ENCODE measurements at regions of chr1 and their contacts with region 1.

Region 1: DNA sequence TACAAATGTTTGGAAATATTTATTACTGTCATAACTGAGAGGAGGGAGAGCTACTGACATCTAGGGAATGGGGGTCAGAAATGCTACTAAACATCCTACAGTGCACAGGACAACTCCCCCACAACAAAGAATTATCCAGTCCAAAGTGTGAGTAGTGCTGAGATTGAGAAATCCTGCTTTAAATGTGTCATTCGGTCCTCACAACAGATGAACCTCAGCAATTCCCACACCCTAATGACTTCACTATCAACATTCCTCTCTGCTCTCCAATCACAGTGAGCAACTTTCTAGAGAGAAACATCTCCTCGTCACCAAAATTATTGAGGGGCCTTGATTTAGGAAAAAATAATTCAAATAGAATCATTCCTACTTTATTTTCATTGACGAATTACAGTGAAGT is 18.0 kb downstream of the OMA1 start:
- DNase-seq: no peak
- ATAC-seq: no peak
- H3K4me3 Mint-ChIP-seq: no peak overlapping the region
- H3K27ac Mint-ChIP-seq: no peak overlapping the region
- H3K4me1 Mint-ChIP-seq: no peaks in the 10 kb centered on the region
- H3K27me3 Mint-ChIP-seq: no peaks in the 10 kb centered on the region

Region 2: GRCh38 chr1:58546520-58547308 is 18.2 kb after region 1 on chr1 and contains the start of gene OMA1:
- CTCF ChIA-PET with region 1: interaction called, 17 read pairs
- POLR2A ChIA-PET with region 1: no interaction called
- DNase-seq: peak; percentile 97
- ATAC-seq: peak; percentile 96
- H3K4me3 Mint-ChIP-seq: peak within 1 kb of the TSS; percentile 91
- H3K27ac Mint-ChIP-seq: peak within 1 kb of the TSS; percentile 98
- H3K4me1 Mint-ChIP-seq: peaks cover 16% of the 10 kb centered on the region
- H3K27me3 Mint-ChIP-seq: peaks cover 3% of the 10 kb centered on the region
- total RNA-seq, gene OMA1: 22.3 to 23.9 TPM

Region 3: DNA sequence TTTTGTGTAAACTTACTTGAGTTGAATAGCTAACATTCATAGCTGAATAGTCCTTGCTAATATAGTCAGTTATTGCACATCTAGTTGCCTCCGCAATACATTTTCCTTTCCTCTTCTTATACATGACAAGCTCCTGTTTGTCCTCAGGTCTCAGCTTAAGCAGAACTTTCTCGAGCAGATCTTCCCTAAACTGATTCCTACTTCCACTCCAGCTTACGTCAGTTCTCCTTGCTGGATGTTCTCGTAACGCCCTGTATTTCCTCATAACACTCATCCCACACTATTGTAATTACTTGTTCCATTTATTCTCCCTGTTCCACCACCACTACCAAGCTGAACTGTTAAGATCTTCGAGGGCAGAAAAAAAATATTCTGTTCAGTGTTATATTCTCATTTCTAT is 33.1 kb after region 1 on chr1:
- CTCF ChIA-PET with region 1: no interaction called
- POLR2A ChIA-PET with region 1: no interaction called
- DNase-seq: no peak
- ATAC-seq: no peak
- H3K4me3 Mint-ChIP-seq: no peak overlapping the region
- H3K27ac Mint-ChIP-seq: no peak overlapping the region
- H3K4me1 Mint-ChIP-seq: no peaks in the 10 kb centered on the region
- H3K27me3 Mint-ChIP-seq: peaks cover 41% of the 10 kb centered on the region